Lower leg skin (tissue), 4 donors: ENCODE measurements at regions of chr9 and their contacts with region 1.

Region 1: GRCh38 chr9:122125158-122125508 is 32.0 kb upstream of the TTLL11 start:
- DNase-seq: peak; percentile 56 to 94
- H3K4me3 ChIP-seq: no peak overlapping the region
- CTCF ChIP-seq: peak in 1 of 3 donors; percentile 88
- POLR2A ChIP-seq: no peak

Region 2: GRCh38 chr9:122236681-122237080 is 111.5 kb after region 1 on chr9:
- intact Hi-C with region 1: no loop called
- DNase-seq: no peak
- H3K4me3 ChIP-seq: no peak overlapping the region
- CTCF ChIP-seq: no peak
- POLR2A ChIP-seq: no peak

Region 3: DNA sequence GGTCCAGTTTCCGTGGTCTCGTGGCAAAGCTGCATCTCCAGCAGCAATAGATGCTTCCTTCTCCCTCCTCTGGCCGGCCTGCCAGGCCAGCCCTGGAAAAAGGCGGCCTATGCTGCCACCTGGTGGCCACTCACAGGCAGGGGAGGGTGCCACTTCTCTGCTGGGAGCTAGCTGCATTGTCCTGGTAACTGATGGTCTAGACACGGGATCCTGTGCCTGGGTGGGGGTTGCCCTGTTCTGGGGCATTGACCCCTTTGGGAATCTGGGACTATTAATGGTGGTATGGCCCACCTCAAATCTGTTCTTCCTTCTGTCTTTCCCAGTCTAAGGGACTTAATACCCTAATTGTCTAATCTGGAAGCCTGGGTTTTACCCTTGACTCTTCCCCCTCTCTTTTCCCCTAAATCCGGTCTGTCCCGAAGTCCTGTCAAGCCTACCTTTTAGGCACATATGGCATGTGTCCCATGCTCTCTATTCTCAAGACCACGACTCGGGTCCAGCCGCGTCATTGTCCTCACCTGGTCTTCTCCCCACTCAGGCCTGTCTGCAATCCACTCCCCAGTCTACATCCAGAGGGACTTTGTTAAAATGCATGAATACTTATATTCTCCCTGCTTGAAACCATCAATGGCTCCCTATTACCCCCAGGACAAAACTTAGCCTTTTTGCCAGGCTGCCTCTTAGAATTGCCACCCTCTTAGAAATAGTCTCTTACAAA is 225.7 kb after region 1 on chr9:
- intact Hi-C with region 1: loop called (anchors 2 kb)
- DNase-seq: peak; percentile 68 to 95
- H3K4me3 ChIP-seq: no peak overlapping the region
- CTCF ChIP-seq: peak in 1 of 3 donors; percentile 57
- POLR2A ChIP-seq: no peak